ENCODE measurements at regions of chr17 and their contacts with region 1.

Region 1: GRCh38 chr17:18033442-18034099 is 5.4 kb downstream of the ATPAF2 start:
- DNase-seq: peak; percentile 87
- H3K4me3 ChIP-seq: no peak overlapping the region
- H3K27ac ChIP-seq: no peak overlapping the region
- H3K4me1 ChIP-seq: peaks cover 32% of the 10 kb centered on the region
- CTCF ChIP-seq: peak; percentile 86

Region 2: DNA sequence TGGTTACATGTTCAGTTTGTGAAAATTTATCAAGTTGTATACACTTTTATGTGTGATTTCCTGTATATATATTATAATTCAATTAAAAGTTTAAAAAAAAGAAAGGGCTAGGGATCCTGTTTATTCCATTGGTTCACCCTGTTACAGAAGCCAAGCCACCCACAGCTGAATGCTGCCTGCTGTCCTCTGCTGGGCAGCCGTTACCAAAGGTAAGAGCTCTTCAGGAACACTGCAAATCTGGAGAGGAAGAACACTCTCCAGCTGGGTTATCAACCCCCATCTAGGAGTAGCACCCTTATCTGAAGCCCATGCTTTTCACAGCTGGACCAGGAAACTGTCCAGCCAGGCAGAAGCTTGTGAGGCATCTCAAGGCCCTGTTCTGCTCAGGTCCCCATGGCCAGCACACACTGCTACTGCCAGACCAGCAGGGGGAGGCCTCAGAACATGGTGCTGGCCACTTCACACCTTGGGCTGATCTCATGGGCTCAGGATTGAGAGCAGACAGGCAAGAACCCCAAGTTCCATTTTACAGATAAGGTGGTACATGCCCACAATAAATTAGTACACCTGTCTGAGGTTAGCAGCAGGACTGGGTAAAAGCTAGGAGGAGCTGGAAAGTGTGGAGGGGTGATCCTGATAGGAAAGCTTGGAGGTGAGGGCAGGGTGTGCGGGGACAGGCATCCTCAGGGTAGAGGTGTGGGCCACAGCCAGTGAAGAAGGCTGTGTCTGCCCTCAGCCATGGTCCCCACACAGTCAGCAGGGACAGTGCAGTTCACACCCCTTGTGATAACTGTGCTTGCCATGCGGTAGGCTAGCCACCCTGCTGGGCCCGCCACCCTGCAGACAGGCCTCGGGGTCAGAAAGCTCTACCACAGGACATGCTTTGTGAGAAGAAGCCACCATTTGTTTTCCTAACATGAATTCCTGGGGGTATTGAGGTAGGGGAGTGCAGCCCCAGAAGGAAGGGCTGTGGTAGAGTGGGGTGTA is 142.5 kb before region 1 on chr17:
- CTCF ChIA-PET with region 1: no interaction called
- POLR2A ChIA-PET with region 1: no interaction called
- intact Hi-C with region 1: loop called (anchors 2 kb)
- DNase-seq: peak; percentile 43
- H3K4me3 ChIP-seq: no peak overlapping the region
- H3K27ac ChIP-seq: no peak overlapping the region
- H3K4me1 ChIP-seq: peaks cover 7% of the 10 kb centered on the region
- CTCF ChIP-seq: peak; percentile 61

Region 3: GRCh38 chr17:17994271-17995069 is 39.1 kb before region 1 on chr17:
- CTCF ChIA-PET with region 1: interaction called, 3 read pairs
- POLR2A ChIA-PET with region 1: no interaction called
- intact Hi-C with region 1: loop called (anchors 5 kb)
- DNase-seq: peak; percentile 58
- H3K4me3 ChIP-seq: no peak overlapping the region
- H3K27ac ChIP-seq: no peak overlapping the region
- H3K4me1 ChIP-seq: no peaks in the 10 kb centered on the region
- CTCF ChIP-seq: peak; percentile 71

Measured in OCI-LY7 (cell line).